ENCODE measurements at regions of chr15 and their contacts with region 1.

Region 1: DNA sequence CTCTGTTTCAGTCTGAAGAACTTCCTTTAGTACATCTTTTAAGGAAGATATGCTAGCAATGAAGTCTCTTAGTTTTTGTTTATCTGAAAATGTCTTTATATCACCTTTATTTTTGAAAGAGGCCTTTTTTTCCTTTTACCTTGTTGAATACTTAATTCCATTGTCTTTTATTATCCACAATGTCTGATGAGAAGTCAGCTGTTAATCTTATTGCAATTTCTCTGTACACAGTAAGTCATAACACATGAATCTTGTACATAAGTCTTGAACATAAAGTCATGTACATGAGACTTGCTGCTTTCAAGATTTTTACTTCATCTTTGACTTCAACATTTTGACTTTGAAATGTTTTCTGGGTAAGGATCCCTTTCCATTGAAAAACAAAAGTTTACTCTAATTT is 424.3 kb upstream of the ATP10A start:
- DNase-seq: no peak
- ATAC-seq: no peak

Region 2: DNA sequence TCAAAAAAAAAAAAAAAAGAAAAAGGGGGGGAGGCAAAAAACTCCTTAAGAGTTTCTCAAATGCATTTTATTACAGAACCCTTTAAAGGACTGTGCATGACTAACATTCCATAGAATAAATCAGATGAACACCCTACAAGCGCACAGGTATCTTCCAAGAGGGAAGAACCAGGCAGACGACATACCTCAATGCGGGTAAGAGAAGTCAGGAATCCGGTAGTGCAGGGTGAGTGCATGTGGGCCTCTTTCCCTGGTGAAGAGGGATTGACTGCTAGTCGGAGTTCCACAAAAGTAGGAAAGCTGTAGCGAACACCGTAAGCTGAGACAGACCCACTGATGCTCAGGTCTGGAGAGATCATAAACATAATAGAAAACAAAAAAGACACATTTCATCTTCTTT is 53.0 kb after region 1 on chr15:
- intact Hi-C with region 1: loop called in 1 of 2 experiments (anchors 10 kb)
- DNase-seq: no peak
- ATAC-seq: no peak

Region 3: DNA sequence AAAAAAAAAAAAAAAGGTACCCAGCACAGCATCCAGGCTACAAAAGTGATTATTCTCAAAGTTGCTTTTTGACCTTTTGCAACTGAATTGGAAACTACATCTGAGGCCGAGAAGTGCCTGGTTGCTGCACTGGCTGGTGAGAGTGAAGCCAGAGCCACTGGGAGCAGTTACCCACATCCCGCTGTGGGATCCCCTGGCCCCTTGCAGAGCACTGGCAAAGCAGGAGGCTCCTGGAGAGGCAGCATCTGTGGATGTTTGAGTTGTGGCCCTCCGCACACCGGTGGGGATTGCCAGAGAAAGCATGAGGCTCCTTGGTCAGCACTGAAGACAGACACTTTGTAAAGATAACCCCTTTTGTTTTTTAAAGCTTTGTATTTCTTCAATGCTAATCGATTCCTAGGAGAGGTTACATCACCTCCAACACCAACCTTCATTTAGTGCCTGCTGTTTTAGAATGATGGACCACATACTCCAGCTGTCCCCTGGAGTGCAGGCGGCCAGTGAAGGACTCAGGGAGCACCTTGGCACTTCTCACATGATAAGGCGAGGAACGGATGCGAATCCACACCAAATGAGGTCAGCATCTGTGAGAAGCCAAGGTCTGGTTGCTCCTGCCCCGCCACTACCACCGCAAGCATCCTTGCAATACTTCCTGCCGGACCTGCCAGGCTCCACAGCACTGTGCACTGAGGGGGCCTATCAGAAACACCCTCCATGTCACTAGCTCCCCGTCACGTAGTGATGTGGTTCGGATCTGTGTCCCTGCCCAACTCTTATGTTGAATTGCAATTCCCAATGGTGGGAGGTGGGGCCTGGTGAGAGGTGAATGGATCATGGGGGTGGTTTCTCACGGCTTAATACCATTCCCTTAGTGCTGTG is 229.0 kb after region 1 on chr15:
- intact Hi-C with region 1: loop called in 1 of 2 experiments (anchors 5 kb)
- DNase-seq: no peak
- ATAC-seq: no peak